PC-9 (cell line): ENCODE measurements at regions of chr1 and their contacts with region 1.

Region 1: DNA sequence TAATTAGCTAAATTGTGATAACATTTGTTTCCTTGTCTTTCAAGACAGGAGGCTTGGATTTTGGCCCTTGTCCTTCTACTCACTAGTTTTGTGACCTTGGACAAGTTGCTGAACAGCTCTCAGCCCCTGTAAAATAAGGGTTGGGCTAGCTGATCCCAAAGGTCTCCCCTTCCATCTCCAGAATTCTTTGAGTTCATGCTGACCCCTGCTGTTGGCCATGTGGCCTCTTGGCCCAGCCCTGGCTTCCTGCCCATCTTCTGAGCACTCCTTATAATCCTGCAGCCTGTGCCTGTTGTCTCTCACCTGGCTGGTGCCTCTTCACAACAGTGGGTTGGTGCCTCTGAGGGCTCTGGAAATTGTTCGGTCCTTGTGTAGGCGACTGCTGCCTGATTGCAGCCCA is 10.1 kb downstream of the PTGFRN start:
- DNase-seq: no peak
- H3K4me3 ChIP-seq: no peak overlapping the region
- H3K27ac ChIP-seq: peak overlapping the region; percentile 43
- H3K4me1 ChIP-seq: peaks cover 46% of the 10 kb centered on the region
- H3K27me3 ChIP-seq: no peaks in the 10 kb centered on the region
- CTCF ChIP-seq: no peak

Region 2: DNA sequence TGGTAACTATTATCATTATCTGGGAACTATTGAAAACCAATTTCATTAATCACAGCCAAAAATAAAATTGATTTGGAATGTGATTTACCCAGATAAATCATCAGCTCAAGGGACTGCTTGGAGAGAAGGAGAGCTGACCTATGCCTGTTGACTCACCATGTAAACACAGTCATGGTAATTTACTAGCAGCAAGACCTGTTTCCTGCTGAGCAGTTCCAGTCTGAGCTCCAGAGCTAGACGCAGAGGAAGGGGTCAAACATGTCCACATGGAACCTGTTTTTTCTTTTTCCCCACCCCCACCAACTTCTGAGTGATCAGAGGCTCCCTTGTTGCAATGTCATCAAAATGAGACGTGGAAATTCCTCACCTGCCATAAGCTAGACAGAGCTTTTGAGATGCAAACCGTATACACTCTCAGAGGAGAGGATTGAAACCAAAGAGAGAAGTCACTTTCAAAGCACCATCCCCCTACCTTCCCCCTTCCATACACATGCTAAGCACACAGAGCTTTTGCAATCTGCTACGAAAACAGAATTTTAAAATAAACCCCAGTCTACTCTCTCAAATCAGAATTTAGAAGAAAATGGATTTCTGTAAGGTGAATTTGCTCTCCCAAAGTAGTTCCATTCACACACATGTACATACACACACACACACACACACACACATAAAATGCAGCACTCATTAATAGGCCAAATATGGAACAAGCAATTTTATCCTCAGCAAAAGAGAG is 66.0 kb before region 1 on chr1:
- CTCF ChIA-PET with region 1: no interaction called
- POLR2A ChIA-PET with region 1: interaction called, 3 read pairs
- intact Hi-C with region 1: loop called (anchors 5 kb)
- DNase-seq: peak; percentile 71 to 100
- H3K4me3 ChIP-seq: peak overlapping the region; percentile 34; the same call in 1 of the 2 replicates
- H3K27ac ChIP-seq: peak overlapping the region; percentile 77
- H3K4me1 ChIP-seq: peaks cover 47% of the 10 kb centered on the region
- H3K27me3 ChIP-seq: no peaks in the 10 kb centered on the region
- CTCF ChIP-seq: no peak